Activated CD4-positive, alpha-beta memory T cell treated with anti-CD3 and anti-CD28 coated beads for 36 hours (primary cell): ENCODE measurements at regions of chr12 and their contacts with region 1.

Region 1: GRCh38 chr12:14284184-14284722 is 81.2 kb upstream of the ATF7IP start:
- DNase-seq: no peak
- H3K4me3 Mint-ChIP-seq: no peak overlapping the region
- H3K27ac Mint-ChIP-seq: no peak overlapping the region
- H3K4me1 Mint-ChIP-seq: peaks cover 5% of the 10 kb centered on the region
- H3K27me3 Mint-ChIP-seq: no peaks in the 10 kb centered on the region

Region 2: DNA sequence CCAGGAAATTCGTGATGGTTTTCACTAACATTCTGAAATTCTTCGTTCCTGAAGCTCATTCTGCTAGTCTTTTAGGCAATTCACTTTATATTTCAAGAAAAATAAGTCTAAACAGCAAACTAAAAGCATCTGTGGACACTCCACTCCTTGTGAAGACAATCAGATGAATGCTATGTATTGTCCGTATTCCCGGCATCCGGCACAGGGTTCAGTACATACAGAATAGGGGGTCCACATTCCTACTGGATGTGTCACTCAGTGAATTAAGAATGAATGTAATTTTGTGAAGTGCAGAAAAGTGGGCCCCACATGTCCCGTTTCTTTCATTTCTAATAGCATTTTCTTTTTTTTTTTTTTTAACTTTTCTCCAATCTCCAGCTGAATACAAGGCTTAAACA is 544.1 kb before region 1 on chr12:
- CTCF ChIA-PET with region 1: no interaction called
- POLR2A ChIA-PET with region 1: no interaction called
- intact Hi-C with region 1: no loop called
- DNase-seq: no peak
- H3K4me3 Mint-ChIP-seq: no peak overlapping the region
- H3K27ac Mint-ChIP-seq: no peak overlapping the region
- H3K4me1 Mint-ChIP-seq: no peaks in the 10 kb centered on the region
- H3K27me3 Mint-ChIP-seq: peaks cover 8% of the 10 kb centered on the region

Region 3: GRCh38 chr12:14314801-14315200 is 30.5 kb after region 1 on chr12:
- CTCF ChIA-PET with region 1: no interaction called
- POLR2A ChIA-PET with region 1: no interaction called
- intact Hi-C with region 1: loop called (anchors 5 kb)
- DNase-seq: no peak
- H3K4me3 Mint-ChIP-seq: no peak overlapping the region
- H3K27ac Mint-ChIP-seq: no peak overlapping the region
- H3K4me1 Mint-ChIP-seq: no peaks in the 10 kb centered on the region
- H3K27me3 Mint-ChIP-seq: no peaks in the 10 kb centered on the region